ENCODE measurements at regions of chr7 and their contacts with region 1.

Region 1: GRCh38 chr7:32164346-32164957 is 94.2 kb upstream of the PDE1C start:
- DNase-seq: no peak
- ATAC-seq: no peak
- H3K4me3 ChIP-seq: no peak overlapping the region
- H3K27ac ChIP-seq: no peak overlapping the region
- H3K4me1 ChIP-seq: peaks cover 6 to 11% of the 10 kb centered on the region in 2 donors
- H3K27me3 ChIP-seq: no peaks in the 10 kb centered on the region

Region 2: DNA sequence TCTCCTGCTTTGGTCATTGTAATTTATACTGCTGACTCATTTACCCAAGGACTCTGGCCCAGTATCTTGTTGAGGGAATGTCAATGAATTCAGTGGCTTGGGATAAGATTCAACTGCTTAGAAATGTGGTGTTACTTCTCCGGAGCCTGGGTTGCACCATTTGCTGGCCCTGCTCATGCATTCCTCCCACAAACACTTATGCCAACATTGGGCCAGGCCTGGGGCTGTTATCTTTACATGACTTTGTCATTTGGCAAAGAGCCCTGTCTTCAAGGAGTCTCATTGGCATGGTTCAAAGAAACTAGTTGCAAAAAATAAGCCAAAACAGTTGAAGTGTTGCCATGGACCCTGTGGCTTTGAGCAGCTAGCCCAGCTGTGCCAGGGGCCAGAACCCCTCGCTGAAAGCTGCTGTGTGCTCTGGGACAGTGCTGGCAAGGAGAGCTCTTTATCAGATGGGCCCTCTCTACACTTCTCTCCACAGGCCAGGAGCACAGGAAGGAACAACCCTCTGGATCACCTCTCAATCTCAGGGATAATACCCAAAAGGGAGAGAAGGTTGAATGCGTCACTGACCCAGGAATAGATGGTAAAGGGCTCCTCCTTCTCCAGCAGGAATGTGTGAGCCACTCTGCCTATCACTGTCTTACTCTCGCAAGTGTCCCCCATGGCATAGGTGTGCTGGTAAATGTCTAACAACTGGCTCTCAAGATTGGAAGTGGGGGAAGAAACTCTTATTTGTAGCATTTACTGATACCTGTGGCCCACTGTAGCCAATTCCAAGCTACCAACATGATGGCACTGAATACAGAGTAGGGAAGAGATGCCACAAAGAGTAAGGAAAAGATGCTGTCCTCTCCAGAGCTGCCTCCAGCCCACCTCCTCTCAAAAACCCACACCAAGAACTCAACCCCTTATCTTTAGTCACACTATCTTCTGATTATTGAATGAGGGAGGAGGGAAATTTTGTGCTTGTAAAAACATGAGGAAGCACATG is 70.7 kb before region 1 on chr7:
- intact Hi-C with region 1: loop called in 1 of 2 experiments (anchors 5 kb)
- DNase-seq: peak; percentile 74 to 84
- ATAC-seq: peak; percentile 44
- H3K4me3 ChIP-seq: no peak overlapping the region
- H3K27ac ChIP-seq: peak overlapping the region in 1 of 2 donors; percentile 51
- H3K4me1 ChIP-seq: peaks cover 0 to 3% of the 10 kb centered on the region in 2 donors
- H3K27me3 ChIP-seq: no peaks in the 10 kb centered on the region

Region 3: DNA sequence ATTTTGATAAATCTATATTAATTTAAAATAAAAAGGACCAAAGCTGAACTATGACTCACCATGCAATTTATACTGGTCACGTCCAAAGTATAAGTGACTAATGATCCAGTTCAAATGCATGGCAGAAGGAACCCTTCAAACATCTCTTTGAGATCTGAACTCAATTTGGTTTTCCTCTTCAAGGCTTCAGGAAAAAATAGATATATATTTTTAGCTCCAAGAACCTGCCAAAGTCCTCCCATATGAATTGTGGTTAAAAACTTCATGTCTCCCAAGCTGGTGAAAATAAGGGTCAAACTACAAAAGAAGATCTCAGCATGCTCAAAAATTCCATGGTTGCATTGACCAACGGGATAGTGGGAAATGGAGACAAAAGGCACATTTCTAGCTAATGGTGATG is 59.7 kb before region 1 on chr7:
- intact Hi-C with region 1: no loop called
- DNase-seq: no peak
- ATAC-seq: no peak
- H3K4me3 ChIP-seq: no peak overlapping the region
- H3K27ac ChIP-seq: no peak overlapping the region
- H3K4me1 ChIP-seq: no peaks in the 10 kb centered on the region
- H3K27me3 ChIP-seq: no peaks in the 10 kb centered on the region

Region 4: DNA sequence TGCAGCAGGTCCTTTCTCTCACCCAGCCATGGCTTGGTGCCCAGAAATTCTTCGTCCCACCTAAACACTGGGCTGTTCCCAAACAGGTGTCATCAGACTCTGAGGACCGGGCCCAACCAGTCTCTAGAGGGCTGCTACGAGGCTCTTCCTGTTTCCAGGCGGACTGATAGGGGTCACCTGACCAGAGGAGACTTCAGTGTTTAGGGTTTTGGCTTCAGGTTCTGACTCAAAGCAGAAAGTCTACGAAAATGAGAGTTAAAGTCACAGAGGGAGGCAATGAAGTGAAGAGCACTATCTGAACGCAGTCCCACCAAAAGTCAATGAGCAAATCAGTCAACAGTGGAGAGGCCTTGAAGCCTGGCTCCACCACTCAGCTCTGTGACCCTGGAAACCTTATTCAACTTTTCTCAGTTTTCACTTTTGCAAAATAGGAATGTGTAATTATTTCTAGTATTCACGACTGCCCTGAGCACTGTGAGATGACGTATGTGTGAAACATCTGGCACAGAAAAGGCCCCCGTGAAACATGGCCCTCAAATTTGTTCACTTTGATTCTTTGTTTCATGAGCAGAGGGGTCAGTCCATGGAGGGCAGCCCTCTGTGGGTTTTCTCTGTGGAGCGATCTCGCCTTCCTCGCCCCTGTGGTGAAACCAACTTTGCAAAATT is 95.6 kb after region 1 on chr7:
- intact Hi-C with region 1: no loop called
- DNase-seq: no peak
- ATAC-seq: no peak
- H3K4me3 ChIP-seq: no peak overlapping the region
- H3K27ac ChIP-seq: no peak overlapping the region
- H3K4me1 ChIP-seq: no peaks in the 10 kb centered on the region
- H3K27me3 ChIP-seq: no peaks in the 10 kb centered on the region

Measured in aorta (tissue), 5 donors.